ENCODE measurements at regions of chr20 and their contacts with region 1.

Region 1: GRCh38 chr20:1535420-1536175 is 21.9 kb downstream of the SIRPD start:
- DNase-seq: peak; percentile 58
- H3K4me3 ChIP-seq: no peak overlapping the region
- H3K27ac ChIP-seq: no peak overlapping the region
- H3K4me1 ChIP-seq: peaks cover 7% of the 10 kb centered on the region
- CTCF ChIP-seq: no peak

Region 2: DNA sequence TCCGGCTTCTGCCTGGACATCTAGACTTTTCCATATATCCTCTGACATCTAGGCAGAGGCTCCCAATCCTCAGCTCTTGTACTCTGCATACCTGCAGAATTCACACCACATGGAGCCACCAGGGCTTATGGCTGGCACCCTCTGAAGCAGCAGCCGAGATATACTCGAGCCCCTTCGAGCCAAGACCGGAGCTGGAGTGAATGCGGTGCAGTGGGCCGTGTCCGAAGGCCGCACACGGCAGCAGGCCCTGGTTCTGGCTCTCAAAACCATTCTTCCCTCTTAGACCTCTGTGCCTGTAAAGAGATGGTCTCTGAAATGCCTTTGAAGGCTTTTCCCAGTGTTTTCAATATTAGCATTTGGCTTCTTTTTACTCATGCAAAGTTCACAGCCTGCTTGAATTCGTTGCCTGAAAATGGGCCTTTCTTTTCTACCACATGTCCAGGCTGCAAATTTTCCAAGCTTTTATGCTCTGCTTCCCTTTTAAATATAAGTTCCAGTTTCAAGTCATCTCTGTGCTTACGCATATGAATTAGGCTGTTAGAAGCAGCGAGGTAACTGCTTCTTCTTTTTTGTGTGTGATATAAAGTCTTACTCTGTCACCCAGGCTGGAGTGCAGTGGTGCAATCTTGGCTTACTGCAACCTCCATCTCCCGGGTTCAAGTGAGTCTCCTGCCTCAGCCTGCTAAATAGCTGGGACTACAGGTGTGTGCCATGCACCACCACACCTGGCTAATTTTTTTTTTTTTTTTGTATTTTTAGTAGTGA is 88.1 kb after region 1 on chr20:
- CTCF ChIA-PET with region 1: no interaction called
- POLR2A ChIA-PET with region 1: no interaction called
- intact Hi-C with region 1: loop called (anchors 2 kb)
- DNase-seq: no peak
- H3K4me3 ChIP-seq: no peak overlapping the region
- H3K27ac ChIP-seq: no peak overlapping the region
- H3K4me1 ChIP-seq: no peaks in the 10 kb centered on the region
- CTCF ChIP-seq: no peak